WTC11 (cell line): ENCODE measurements at regions of chr3 and their contacts with region 1.

Region 1: DNA sequence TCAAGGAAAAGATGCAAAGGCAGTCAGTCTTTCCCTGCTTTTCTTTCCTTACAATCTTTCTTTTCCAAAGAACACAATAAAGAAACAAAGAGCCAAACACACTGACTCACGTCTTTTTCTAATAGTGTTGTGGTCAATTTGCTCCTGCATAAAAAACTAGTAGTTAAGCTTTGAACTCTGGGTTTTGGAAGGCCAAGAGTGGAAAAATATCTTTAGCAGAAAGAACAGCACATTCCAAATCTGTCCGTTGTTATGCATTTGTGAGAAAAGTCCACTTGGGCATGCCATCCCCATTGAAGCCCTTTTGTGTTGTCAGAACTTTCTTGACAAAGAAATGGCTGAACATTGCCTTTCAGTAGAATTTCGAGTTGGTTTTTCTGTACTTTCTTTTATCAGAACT is 18.2 kb downstream of the COL8A1 start:
- DNase-seq: no peak
- ATAC-seq: no peak
- H3K4me3 Mint-ChIP-seq: no peak overlapping the region
- H3K27ac Mint-ChIP-seq: no peak overlapping the region
- H3K4me1 Mint-ChIP-seq: no peaks in the 10 kb centered on the region
- H3K27me3 Mint-ChIP-seq: no peaks in the 10 kb centered on the region
- CTCF ChIP-seq: no peak

Region 2: GRCh38 chr3:99645277-99646106 is 11.1 kb before region 1 on chr3:
- CTCF ChIA-PET with region 1: interaction called, 11 read pairs
- POLR2A ChIA-PET with region 1: no interaction called
- DNase-seq: peak; percentile 58
- ATAC-seq: peak; percentile 86
- H3K4me3 Mint-ChIP-seq: no peak overlapping the region
- H3K27ac Mint-ChIP-seq: no peak overlapping the region
- H3K4me1 Mint-ChIP-seq: peaks cover 24% of the 10 kb centered on the region
- H3K27me3 Mint-ChIP-seq: peaks cover 4% of the 10 kb centered on the region
- CTCF ChIP-seq: peak; percentile 52